Activated CD4-positive, alpha-beta memory T cell treated with anti-CD3 and anti-CD28 coated beads, Interleukin-2, amount 10 ng/mL, durations not matched to agents 7 days and 5 days (primary cell): ENCODE measurements at regions of chr7 and their contacts with region 1.

Region 1: GRCh38 chr7:131107337-131108211 is 220.1 kb upstream of the MKLN1 start:
- DNase-seq: peak; percentile 83
- H3K4me3 Mint-ChIP-seq: peak overlapping the region; percentile 98
- H3K27ac Mint-ChIP-seq: peak overlapping the region; percentile 98
- H3K4me1 Mint-ChIP-seq: peaks cover 60% of the 10 kb centered on the region
- H3K27me3 Mint-ChIP-seq: no peaks in the 10 kb centered on the region

Region 2: DNA sequence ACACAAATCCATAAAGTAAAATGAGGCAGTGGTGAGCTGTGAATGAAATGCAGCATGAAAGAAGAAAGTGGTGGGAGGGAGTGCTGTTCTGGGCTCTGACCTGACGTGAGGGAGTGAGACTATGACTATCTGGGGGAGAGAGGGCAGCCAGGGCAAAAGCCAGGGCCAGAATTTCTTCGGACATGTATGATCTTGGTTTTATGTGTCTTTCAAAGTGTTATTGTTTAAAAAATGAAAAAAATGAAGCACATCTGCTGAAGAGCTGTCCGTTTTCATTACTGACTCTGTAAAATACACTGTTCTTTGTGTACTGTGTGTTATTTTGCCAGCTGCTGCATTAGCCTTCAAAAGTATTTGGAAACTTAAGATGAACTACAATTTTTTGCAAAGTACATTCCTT is 303.4 kb before region 1 on chr7:
- CTCF ChIA-PET with region 1: no interaction called
- POLR2A ChIA-PET with region 1: no interaction called
- DNase-seq: no peak
- H3K4me3 Mint-ChIP-seq: no peak overlapping the region
- H3K27ac Mint-ChIP-seq: no peak overlapping the region
- H3K4me1 Mint-ChIP-seq: no peaks in the 10 kb centered on the region
- H3K27me3 Mint-ChIP-seq: peaks cover 17% of the 10 kb centered on the region

Region 3: GRCh38 chr7:130875265-130875741 is 232.3 kb before region 1 on chr7:
- CTCF ChIA-PET with region 1: no interaction called
- POLR2A ChIA-PET with region 1: no interaction called
- DNase-seq: peak; percentile 52
- H3K4me3 Mint-ChIP-seq: no peak overlapping the region
- H3K27ac Mint-ChIP-seq: peak overlapping the region; percentile 8
- H3K4me1 Mint-ChIP-seq: peaks cover 31% of the 10 kb centered on the region
- H3K27me3 Mint-ChIP-seq: no peaks in the 10 kb centered on the region

Region 4: GRCh38 chr7:131057015-131057793 is 50.4 kb before region 1 on chr7:
- CTCF ChIA-PET with region 1: interaction called, 7 read pairs
- POLR2A ChIA-PET with region 1: interaction called, 17 read pairs
- DNase-seq: peak; percentile 34
- H3K4me3 Mint-ChIP-seq: peak overlapping the region; percentile 72
- H3K27ac Mint-ChIP-seq: peak overlapping the region; percentile 96
- H3K4me1 Mint-ChIP-seq: peaks cover 57% of the 10 kb centered on the region
- H3K27me3 Mint-ChIP-seq: no peaks in the 10 kb centered on the region

Region 5: DNA sequence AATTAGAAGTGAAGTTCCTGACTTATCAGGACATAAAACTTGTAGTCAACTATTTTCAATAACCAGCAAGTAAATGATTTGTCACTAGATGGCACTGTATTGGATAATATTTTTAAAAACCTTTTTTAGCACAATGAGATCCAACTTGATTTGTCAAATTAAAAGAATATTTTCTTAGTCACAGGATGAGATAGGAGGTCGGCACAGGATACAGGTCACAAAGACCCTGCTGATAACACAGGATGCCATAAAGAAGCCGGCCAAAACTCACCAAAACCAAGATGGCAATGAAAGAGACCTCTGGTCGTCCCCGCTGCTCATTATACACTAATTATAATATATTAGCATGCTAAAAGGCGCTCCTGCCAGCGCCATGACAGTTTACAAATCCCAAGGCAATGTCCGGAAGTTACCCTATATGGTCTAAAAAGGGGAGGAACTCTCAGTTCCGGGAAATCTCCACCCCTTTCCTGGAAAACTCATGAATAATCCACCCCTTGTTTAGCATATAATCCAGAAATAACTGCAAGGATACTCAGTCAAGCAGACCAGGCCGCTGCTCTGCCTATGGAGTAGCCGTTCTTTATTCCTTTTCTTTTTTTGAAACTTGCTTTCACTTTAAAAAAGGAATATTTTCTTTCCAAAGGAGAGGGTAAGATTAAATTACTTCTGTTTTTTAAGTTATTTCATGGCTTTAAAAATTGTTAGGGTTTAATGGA is 35.6 kb before region 1 on chr7:
- CTCF ChIA-PET with region 1: interaction called, 9 read pairs
- POLR2A ChIA-PET with region 1: interaction called, 10 read pairs
- DNase-seq: no peak
- H3K4me3 Mint-ChIP-seq: no peak overlapping the region
- H3K27ac Mint-ChIP-seq: peak overlapping the region; percentile 27
- H3K4me1 Mint-ChIP-seq: peaks cover 56% of the 10 kb centered on the region
- H3K27me3 Mint-ChIP-seq: no peaks in the 10 kb centered on the region

Region 6: GRCh38 chr7:131188367-131189339 is 81.1 kb after region 1 on chr7:
- CTCF ChIA-PET with region 1: interaction called, 23 read pairs
- POLR2A ChIA-PET with region 1: interaction called, 247 read pairs
- DNase-seq: peak; percentile 68
- H3K4me3 Mint-ChIP-seq: peak overlapping the region; percentile 14
- H3K27ac Mint-ChIP-seq: peak overlapping the region; percentile 93
- H3K4me1 Mint-ChIP-seq: peaks cover 64% of the 10 kb centered on the region
- H3K27me3 Mint-ChIP-seq: no peaks in the 10 kb centered on the region

Region 7: DNA sequence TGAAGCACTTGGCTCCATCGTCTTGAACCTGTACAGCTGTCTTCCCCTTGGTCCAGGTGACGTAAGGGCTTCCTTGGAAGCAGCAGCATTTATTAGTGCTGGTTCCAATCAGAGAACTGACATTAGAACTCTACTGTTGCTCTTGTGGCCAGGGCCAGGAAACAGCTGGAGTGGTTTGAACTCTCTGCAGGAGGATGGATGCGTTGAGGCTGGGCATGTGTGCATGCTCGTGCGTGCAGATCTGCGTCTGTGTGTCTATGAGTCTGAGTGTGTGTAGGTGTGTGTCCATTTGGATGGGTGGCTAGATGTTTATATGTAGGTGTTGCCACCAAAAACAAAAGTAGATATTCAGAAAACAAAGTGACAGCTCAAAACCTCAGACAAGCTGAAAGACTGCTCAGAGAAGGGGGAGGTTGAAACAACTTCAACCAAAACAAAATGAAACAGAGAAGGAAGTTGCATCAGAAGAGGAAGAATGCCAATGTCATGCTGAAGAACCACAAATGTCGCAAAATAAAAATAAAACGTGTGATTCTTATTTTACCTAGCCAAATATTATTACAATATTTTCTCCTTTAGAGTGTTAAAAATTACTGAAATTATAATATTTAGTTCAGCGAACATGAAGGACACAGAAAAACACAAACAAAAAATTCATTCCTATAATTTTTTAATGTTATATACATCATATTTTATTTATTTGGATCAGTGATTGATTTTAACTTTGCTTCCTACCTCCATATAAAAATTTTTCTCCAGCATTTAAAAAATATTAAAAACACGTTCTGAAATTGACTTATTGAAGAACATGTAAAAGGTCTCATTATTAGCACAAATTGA is 124.0 kb after region 1 on chr7:
- CTCF ChIA-PET with region 1: interaction called, 5 read pairs
- POLR2A ChIA-PET with region 1: interaction called, 71 read pairs
- DNase-seq: peak; percentile 77
- H3K4me3 Mint-ChIP-seq: peak overlapping the region; percentile 73
- H3K27ac Mint-ChIP-seq: peak overlapping the region; percentile 94
- H3K4me1 Mint-ChIP-seq: peaks cover 63% of the 10 kb centered on the region
- H3K27me3 Mint-ChIP-seq: no peaks in the 10 kb centered on the region

Region 8: GRCh38 chr7:131238347-131238931 is 130.9 kb after region 1 on chr7:
- CTCF ChIA-PET with region 1: interaction called, 3 read pairs
- POLR2A ChIA-PET with region 1: interaction called, 71 read pairs
- DNase-seq: no peak
- H3K4me3 Mint-ChIP-seq: no peak overlapping the region
- H3K27ac Mint-ChIP-seq: peak overlapping the region; percentile 32
- H3K4me1 Mint-ChIP-seq: peaks cover 48% of the 10 kb centered on the region
- H3K27me3 Mint-ChIP-seq: no peaks in the 10 kb centered on the region

Region 9: GRCh38 chr7:131327626-131328376 is 220.2 kb after region 1 on chr7 and contains the start of gene MKLN1:
- CTCF ChIA-PET with region 1: interaction called, 11 read pairs
- POLR2A ChIA-PET with region 1: interaction called, 74 read pairs
- DNase-seq: peak; percentile 89
- H3K4me3 Mint-ChIP-seq: peak within 1 kb of the TSS; percentile 95
- H3K27ac Mint-ChIP-seq: peak within 1 kb of the TSS; percentile 79
- H3K4me1 Mint-ChIP-seq: peaks cover 53% of the 10 kb centered on the region
- H3K27me3 Mint-ChIP-seq: no peaks in the 10 kb centered on the region
- total RNA-seq, gene MKLN1: 35.9 to 37.3 TPM